BJ (cell line): ENCODE measurements at regions of chr20 and their contacts with region 1.

Region 1: DNA sequence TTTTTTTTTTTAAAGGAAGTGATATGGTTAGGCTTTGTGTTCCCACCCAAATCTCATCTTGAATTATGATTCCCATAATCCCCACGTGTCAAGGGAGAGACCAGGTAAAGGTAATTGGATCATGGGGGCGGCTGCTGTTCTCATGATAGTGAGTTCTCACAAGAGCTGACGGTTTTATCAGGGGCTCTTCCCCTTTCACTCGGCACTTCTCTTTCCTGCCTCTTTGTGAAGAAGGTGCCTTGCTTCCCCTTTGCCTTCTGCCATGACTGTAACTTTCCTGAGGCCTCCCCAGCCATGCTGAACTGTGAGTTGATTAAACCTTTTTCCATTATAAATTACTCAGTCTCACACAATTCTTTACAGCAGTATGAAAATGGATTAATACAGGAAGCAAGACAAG is 64.3 kb downstream of the ZFP64 start:
- DNase-seq: no peak
- H3K4me3 ChIP-seq: no peak overlapping the region
- H3K27me3 ChIP-seq: no peaks in the 10 kb centered on the region
- CTCF ChIP-seq: no peak

Region 2: GRCh38 chr20:52076164-52076563 is 51.1 kb before region 1 on chr20:
- CTCF ChIA-PET with region 1: no interaction called
- POLR2A ChIA-PET with region 1: no interaction called
- DNase-seq: no peak
- H3K4me3 ChIP-seq: no peak overlapping the region
- H3K27me3 ChIP-seq: no peaks in the 10 kb centered on the region
- CTCF ChIP-seq: no peak

Region 3: GRCh38 chr20:52139986-52140385 is 12.7 kb after region 1 on chr20:
- CTCF ChIA-PET with region 1: interaction called, 24 read pairs
- POLR2A ChIA-PET with region 1: no interaction called
- DNase-seq: no peak
- H3K4me3 ChIP-seq: no peak overlapping the region
- H3K27me3 ChIP-seq: no peaks in the 10 kb centered on the region
- CTCF ChIP-seq: no peak

Region 4: GRCh38 chr20:52145587-52145986 is 18.3 kb after region 1 on chr20:
- CTCF ChIA-PET with region 1: interaction called, 24 read pairs
- POLR2A ChIA-PET with region 1: no interaction called
- DNase-seq: no peak
- H3K4me3 ChIP-seq: no peak overlapping the region
- H3K27me3 ChIP-seq: no peaks in the 10 kb centered on the region
- CTCF ChIP-seq: no peak

Region 5: DNA sequence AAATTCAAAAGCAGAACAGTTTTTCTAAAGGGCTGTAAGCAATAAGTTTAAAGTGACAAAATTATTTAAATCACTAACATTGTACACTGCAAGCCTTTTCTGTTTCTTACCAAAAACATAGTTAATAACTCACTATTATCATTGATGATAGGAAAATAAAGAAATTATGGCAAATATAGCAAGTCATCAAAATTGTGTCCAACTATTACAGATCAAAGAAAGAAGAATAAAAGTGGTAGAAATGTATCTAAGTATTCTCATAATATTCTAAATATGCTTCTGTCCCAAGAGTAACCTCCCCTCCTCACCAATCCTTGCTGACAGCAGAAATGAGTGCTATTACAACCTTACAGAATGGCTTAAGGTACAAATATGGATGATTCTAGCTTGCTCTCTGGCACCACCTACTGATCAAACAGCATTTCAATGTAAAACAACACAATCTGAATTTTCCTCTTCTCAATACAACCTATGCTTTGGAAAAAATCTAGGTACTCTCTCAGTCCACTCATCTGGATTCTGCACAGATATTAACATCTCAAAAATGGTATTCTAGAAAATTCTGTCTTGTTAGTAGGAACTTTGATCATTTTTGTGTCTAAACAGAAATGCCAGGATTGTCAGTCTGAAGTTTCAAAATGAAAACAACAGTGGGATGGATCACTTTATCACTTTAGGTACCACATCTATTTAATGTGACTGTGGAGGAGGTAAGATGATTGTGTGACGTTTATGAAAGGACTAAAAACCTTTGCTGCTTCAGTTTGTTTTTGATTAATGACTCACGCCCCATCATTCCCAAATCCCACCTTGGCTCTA is 23.3 kb after region 1 on chr20:
- CTCF ChIA-PET with region 1: interaction called, 24 read pairs
- POLR2A ChIA-PET with region 1: no interaction called
- DNase-seq: peak; percentile 9
- H3K4me3 ChIP-seq: no peak overlapping the region
- H3K27me3 ChIP-seq: no peaks in the 10 kb centered on the region
- CTCF ChIP-seq: peak; percentile 84